ENCODE measurements at regions of chr4 and their contacts with region 1.

Region 1: GRCh38 chr4:81844717-81845116 is 373.0 kb upstream of the RASGEF1B start:
- DNase-seq: peak; percentile 3
- H3K4me3 ChIP-seq: no peak overlapping the region
- CTCF ChIP-seq: peak; percentile 44

Region 2: DNA sequence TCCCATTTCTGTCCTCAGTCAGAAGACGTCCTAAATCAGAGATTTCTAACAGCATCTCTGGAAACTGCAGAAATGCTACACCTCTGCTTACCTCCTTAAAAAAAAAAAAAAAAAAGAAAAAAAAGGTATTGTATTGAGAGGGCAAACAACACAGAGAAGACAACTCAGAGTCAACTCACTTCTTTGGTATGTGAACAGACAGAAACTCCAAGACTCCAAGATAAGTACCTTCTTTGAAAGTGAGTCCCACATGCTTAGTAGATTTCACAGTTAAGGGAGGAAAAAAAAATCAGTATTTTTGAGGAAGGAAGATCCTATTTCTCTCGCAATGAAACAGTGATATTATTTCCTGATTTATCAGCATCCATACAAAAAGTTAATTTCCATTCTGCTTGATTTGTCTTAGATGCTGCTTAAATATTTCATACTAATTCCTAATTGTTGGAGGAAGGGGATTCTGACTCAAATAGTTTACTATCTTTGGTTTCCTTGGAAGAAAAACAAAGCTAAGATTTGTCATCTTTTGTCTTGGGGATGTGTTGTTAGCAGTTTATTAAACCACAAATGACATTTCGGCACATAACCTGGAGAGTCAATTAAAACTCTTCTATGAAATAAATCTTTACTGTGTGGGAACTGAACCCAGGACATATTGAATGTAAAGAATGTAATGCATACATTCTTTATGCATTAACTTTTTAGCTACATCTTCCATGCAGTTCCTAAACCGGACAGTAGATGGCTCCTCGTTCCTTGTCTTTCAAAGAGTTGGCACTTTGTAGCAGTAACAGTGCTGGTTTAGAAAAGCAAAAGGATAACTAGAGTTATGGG is 377.7 kb before region 1 on chr4:
- CTCF ChIA-PET with region 1: interaction called, 42 read pairs
- POLR2A ChIA-PET with region 1: no interaction called
- DNase-seq: peak; percentile 33
- H3K4me3 ChIP-seq: no peak overlapping the region
- CTCF ChIP-seq: peak; percentile 82